ENCODE measurements at regions of chr10 and their contacts with region 1.

Region 1: DNA sequence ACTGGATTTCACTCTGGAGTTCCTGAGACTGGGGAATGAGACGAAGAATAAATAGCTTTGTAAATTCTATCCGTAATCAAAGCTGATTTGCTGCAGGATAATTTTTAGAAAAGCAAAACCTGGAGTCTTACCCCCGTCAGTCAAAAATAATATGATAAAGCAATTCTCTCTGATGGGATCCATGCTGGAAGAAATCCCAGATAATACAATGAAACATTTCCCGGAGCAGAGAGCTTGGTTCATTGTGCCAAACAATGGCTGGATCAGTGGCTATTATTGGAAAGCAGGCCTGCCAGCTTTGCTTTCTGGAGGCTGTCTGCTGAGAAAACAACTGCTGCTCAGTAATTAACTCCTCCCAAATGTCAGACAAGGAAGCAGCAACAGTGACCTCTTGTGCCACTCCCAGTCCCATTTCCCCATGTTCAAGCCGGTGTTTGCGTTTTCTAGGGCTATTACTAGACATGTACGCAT is 609.4 kb upstream of the PCDH15 start:
- DNase-seq: peak in 40 of 42 donors; percentile 16 to 86 (median 61)

Region 2: GRCh38 chr10:55091691-55092328 is 318.6 kb before region 1 on chr10:
- intact Hi-C with region 1: loop called (anchors 5 kb)
- DNase-seq: peak in 4 of 42 donors; percentile 6 to 40 (median 11)